Activated naive CD4-positive, alpha-beta T cell treated with anti-CD3 and anti-CD28 coated beads for 36 hours (primary cell): ENCODE measurements at regions of chr4 and their contacts with region 1.

Region 1: DNA sequence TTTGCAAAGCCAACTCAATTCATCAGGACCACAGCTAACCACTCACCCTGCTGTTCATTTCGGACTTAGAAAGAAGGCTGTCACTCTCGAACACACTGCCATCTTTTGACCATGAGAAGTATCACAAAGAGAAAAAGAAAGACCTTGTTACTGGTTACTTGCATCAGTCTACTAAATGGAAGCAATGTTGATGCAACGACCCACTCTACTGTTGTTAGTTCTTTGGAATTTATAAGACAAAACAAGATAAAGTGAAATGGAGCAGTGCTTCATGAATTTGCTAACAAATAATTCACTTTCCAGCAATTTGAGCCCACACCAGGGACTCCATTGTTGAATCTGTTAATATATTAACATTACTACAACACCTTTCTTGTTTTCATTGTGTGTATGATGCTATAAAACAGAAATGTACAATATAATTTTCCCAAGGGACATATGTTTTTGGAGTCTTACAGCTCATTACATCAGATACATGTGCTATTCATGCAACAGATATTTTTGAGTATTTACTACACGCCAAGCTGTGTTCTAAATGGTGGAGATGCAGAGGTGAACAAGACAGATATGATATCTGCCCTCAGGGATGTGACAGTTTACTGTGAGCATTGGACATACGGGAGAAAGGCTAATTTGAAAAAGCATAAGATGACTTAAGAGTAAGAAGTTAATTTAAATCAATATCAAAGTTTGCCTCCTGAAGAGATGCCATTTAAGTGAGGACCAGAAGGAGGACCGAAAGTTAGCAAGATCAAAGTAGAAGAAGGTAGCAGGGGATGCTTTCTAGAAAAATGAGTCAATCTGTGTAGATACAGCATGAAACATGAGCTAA is 87.2 kb downstream of the AREG start:
- DNase-seq: peak; percentile 6
- H3K4me3 Mint-ChIP-seq: no peak overlapping the region
- H3K27ac Mint-ChIP-seq: no peak overlapping the region
- H3K4me1 Mint-ChIP-seq: no peaks in the 10 kb centered on the region
- H3K27me3 Mint-ChIP-seq: peaks cover 4% of the 10 kb centered on the region

Region 2: DNA sequence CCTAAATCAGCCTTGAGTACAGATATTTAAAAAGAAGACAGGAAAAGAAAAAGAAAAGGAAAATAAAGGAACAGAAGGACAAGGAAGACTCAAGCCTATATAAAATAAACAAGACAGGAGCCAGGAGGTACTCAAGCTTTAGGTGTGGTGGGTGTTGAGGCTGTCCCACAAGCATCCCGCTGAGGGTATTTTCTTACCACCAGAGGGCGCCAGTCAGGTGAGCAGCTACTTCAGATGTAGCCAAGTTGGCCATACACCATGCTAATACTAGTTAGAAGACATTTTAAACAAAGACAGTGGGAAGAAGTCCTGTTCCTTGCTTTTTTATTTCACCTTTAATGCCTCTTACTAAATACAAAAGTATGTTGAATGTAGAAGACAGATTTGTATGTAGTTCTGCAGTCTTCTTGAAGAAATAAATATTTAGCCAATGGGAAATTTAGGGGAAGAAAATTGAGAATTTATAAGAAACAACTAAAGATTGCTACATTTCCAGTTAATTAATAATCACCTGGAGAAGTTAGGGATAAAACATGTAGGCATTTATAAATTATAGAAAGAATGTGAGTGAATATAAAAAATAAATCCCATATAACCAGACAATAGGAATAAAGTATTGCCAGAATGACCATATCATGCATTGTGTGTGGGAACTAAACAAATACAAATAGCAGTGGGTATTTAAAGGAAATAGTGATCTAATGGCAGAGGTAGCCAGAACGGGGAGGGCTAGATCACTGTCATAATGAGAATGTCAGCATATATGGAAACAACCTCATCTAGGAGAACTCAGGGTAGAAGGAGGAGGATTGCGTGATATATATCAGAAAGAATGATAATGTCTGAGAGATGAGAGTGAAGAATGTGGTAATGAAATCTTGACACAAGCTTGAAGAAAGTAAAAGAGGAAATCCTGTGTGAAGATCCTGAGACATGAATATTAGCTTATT is 303.2 kb before region 1 on chr4:
- CTCF ChIA-PET with region 1: interaction called, 4 read pairs
- intact Hi-C with region 1: loop called (anchors 5 kb)
- DNase-seq: peak; percentile 88
- H3K4me3 Mint-ChIP-seq: no peak overlapping the region
- H3K27ac Mint-ChIP-seq: no peak overlapping the region
- H3K4me1 Mint-ChIP-seq: peaks cover 3% of the 10 kb centered on the region
- H3K27me3 Mint-ChIP-seq: no peaks in the 10 kb centered on the region

Region 3: DNA sequence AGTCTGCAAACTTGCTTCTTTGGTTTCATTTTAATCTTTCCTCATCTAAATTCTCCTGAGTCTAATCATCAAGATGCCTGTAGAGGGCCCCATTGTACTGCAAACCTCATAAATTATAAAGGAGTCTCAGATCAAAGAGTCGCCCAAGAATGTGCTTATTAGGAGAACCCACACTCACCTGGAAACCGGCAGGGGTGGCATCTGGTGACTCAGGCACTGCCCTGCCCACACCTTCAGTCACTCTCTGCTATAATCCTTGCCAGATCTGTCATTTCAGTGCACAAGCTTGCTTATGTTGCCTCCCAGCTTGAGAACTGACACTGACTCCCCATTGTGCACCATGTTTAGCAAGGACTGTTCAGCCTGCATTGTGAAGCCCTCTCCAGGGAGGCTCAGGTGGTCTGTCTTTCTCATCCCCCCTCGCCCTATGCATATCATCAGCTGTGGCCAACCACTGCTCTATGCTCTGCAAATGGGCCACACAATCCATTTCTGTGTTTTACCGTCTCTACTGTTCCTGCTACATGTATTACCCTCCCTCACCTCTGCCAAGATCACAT is 211.5 kb before region 1 on chr4:
- CTCF ChIA-PET with region 1: interaction called, 8 read pairs
- intact Hi-C with region 1: loop called (anchors 2 kb)
- DNase-seq: peak; percentile 56
- H3K4me3 Mint-ChIP-seq: no peak overlapping the region
- H3K27ac Mint-ChIP-seq: no peak overlapping the region
- H3K4me1 Mint-ChIP-seq: no peaks in the 10 kb centered on the region
- H3K27me3 Mint-ChIP-seq: peaks cover 19% of the 10 kb centered on the region

Region 4: GRCh38 chr4:74370912-74371311 is 161.3 kb before region 1 on chr4:
- CTCF ChIA-PET with region 1: interaction called, 12 read pairs
- intact Hi-C with region 1: loop called (anchors 1 kb)
- DNase-seq: peak; percentile 53
- H3K4me3 Mint-ChIP-seq: no peak overlapping the region
- H3K27ac Mint-ChIP-seq: no peak overlapping the region
- H3K4me1 Mint-ChIP-seq: no peaks in the 10 kb centered on the region
- H3K27me3 Mint-ChIP-seq: peaks cover 25% of the 10 kb centered on the region

Region 5: DNA sequence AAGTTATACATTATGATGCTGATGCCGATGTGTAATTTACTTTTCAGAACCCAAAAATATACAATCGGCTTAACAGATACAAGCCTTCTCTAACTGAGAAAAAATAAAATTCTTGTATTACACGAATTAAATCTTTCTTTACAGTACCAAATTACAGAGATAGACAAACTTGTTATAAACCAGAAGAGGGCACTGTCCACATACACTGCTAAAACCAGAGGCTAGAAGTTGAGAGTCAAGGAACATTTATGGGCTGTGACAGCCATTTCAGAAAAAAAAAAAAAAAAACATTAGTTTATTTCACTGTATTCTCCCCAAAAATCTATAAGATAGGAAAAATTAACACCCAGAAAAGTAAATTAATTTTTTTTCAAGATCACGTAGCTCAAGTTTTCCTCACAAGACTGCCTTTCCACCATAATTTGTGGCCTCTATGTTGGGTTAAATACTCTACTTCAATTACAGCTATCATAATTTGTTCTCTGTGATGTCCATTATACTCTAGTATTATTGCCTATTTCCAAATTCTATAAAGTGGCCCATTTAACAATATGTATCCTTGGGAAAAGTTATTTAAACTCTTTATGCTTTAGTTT is 155.2 kb before region 1 on chr4:
- CTCF ChIA-PET with region 1: interaction called, 27 read pairs
- intact Hi-C with region 1: loop called (anchors 1 kb)
- DNase-seq: no peak
- H3K4me3 Mint-ChIP-seq: no peak overlapping the region
- H3K27ac Mint-ChIP-seq: no peak overlapping the region
- H3K4me1 Mint-ChIP-seq: no peaks in the 10 kb centered on the region
- H3K27me3 Mint-ChIP-seq: peaks cover 4% of the 10 kb centered on the region

Region 6: GRCh38 chr4:74543231-74543670 is 11.1 kb after region 1 on chr4:
- CTCF ChIA-PET with region 1: interaction called, 32 read pairs
- intact Hi-C with region 1: no loop called
- DNase-seq: peak; percentile 18
- H3K4me3 Mint-ChIP-seq: no peak overlapping the region
- H3K27ac Mint-ChIP-seq: no peak overlapping the region
- H3K4me1 Mint-ChIP-seq: peaks cover 4% of the 10 kb centered on the region
- H3K27me3 Mint-ChIP-seq: no peaks in the 10 kb centered on the region

Region 7: GRCh38 chr4:74675673-74676279 is 143.6 kb after region 1 on chr4:
- CTCF ChIA-PET with region 1: interaction called, 10 read pairs
- intact Hi-C with region 1: loop called (anchors 1 kb)
- DNase-seq: peak; percentile 19
- H3K4me3 Mint-ChIP-seq: no peak overlapping the region
- H3K27ac Mint-ChIP-seq: no peak overlapping the region
- H3K4me1 Mint-ChIP-seq: peaks cover 4% of the 10 kb centered on the region
- H3K27me3 Mint-ChIP-seq: peaks cover 5% of the 10 kb centered on the region